ENCODE measurements at regions of chr16 and their contacts with region 1.

Region 1: GRCh38 chr16:10981697-10982216 is 37.4 kb downstream of the CLEC16A start:
- DNase-seq: peak; percentile 73
- H3K4me3 Mint-ChIP-seq: no peak overlapping the region
- H3K27ac Mint-ChIP-seq: no peak overlapping the region
- H3K4me1 Mint-ChIP-seq: peaks cover 73% of the 10 kb centered on the region
- H3K27me3 Mint-ChIP-seq: no peaks in the 10 kb centered on the region

Region 2: GRCh38 chr16:10885246-10885645 is 96.5 kb before region 1 on chr16:
- CTCF ChIA-PET with region 1: no interaction called
- DNase-seq: no peak
- H3K4me3 Mint-ChIP-seq: no peak overlapping the region
- H3K27ac Mint-ChIP-seq: no peak overlapping the region
- H3K4me1 Mint-ChIP-seq: peaks cover 32% of the 10 kb centered on the region
- H3K27me3 Mint-ChIP-seq: peaks cover 44% of the 10 kb centered on the region

Region 3: GRCh38 chr16:10971560-10971961 is 10.2 kb before region 1 on chr16:
- CTCF ChIA-PET with region 1: interaction called, 22 read pairs
- DNase-seq: peak; percentile 51
- H3K4me3 Mint-ChIP-seq: no peak overlapping the region
- H3K27ac Mint-ChIP-seq: peak overlapping the region; percentile 35
- H3K4me1 Mint-ChIP-seq: peaks cover 77% of the 10 kb centered on the region
- H3K27me3 Mint-ChIP-seq: no peaks in the 10 kb centered on the region

Region 4: DNA sequence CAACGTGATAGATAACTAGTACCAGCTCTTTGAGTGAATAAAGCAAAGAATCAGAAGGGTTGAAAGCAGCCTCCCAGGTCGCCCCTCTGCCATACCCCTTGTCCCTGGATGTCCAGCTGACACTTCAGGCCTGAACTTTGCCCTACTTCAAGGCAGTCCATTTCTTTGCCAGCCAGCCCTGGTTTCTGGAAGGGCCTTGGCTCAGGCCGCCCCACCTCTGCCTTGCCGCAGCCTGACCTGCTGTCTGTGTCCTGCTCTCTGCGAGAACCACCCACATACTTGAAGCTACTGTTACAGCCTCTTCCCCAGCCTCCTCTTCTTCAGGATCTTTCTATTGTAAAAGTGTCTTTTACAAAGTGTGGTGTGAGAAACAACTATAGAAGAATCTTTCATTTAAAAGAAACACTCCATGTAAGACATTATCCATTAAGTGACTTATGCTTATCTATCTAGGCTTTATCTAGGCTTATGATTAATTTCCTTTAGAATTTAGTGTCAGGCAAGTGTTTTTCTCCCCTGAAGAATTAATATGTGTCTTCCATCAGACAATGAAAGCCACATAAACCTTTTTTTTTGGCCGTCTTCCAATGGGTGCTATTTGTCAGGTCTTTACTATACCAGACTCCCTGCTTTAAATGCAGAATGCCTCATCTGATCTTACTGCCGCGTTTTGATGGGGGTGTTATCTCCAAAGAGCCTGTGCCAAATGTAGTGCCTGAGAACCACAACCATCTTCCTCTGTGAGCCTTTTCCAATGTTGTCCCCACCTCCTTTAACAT is 140.3 kb after region 1 on chr16:
- CTCF ChIA-PET with region 1: no interaction called
- DNase-seq: no peak
- H3K4me3 Mint-ChIP-seq: no peak overlapping the region
- H3K27ac Mint-ChIP-seq: no peak overlapping the region
- H3K4me1 Mint-ChIP-seq: peaks cover 19% of the 10 kb centered on the region
- H3K27me3 Mint-ChIP-seq: no peaks in the 10 kb centered on the region

Measured in activated naive CD4-positive, alpha-beta T cell treated with anti-CD3 and anti-CD28 coated beads, Interleukin-2, amount 10 ng/mL, durations not matched to agents 7 days and 5 days (primary cell).